Heart right ventricle (tissue), 16 donors: ENCODE measurements at regions of chr10 and their contacts with region 1.

Region 1: GRCh38 chr10:113399065-113399464 is 153.8 kb upstream of the HABP2 start:
- DNase-seq: no peak
- ATAC-seq: no peak
- H3K4me3 ChIP-seq: no peak overlapping the region
- H3K27ac ChIP-seq: no peak overlapping the region
- H3K4me1 ChIP-seq: no peaks in the 10 kb centered on the region
- H3K27me3 ChIP-seq: peaks cover 0 to 9% (median 0%) of the 10 kb centered on the region in 7 donors
- CTCF ChIP-seq: no peak

Region 2: DNA sequence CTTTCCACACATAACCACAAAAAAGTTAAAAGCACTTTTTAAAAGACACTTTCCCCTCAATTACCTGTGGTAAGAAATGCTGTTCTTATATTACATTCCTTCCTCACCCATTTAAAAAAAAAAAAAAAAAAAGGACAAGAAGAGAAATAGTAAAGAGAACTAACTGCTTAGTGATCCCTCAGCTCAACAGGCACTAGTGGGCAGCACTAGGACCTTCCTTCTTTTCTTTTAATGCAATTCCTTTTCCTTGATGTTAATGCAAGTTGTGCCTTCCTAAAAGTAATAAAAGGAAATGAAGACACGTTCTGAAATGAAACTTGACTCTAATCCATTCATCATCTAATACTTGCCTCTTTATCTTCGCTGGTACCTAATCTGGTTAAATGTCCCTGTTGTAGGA is 259.4 kb before region 1 on chr10:
- intact Hi-C with region 1: loop called in 1 of 10 experiments (anchors 10 kb)
- DNase-seq: no peak
- ATAC-seq: no peak
- H3K4me3 ChIP-seq: no peak overlapping the region
- H3K27ac ChIP-seq: no peak overlapping the region
- H3K4me1 ChIP-seq: peaks cover 0 to 11% (median 7%) of the 10 kb centered on the region in 9 donors
- H3K27me3 ChIP-seq: no peaks in the 10 kb centered on the region
- CTCF ChIP-seq: peak in 2 of 9 donors; percentile 20 to 34

Region 3: GRCh38 chr10:113801569-113801968 is 402.5 kb after region 1 on chr10:
- intact Hi-C with region 1: no loop called
- DNase-seq: no peak
- ATAC-seq: no peak
- H3K4me3 ChIP-seq: no peak overlapping the region
- H3K27ac ChIP-seq: no peak overlapping the region
- H3K4me1 ChIP-seq: no peaks in the 10 kb centered on the region
- H3K27me3 ChIP-seq: peaks cover 0 to 13% (median 0%) of the 10 kb centered on the region in 7 donors
- CTCF ChIP-seq: no peak